Calu3 (cell line): ENCODE measurements at regions of chr7 and their contacts with region 1.

Region 1: GRCh38 chr7:56199639-56200038 is 83.4 kb upstream of the NUPR2 start:
- DNase-seq: no peak
- H3K4me3 Mint-ChIP-seq: no peak overlapping the region
- H3K27ac Mint-ChIP-seq: no peak overlapping the region
- H3K4me1 Mint-ChIP-seq: no peaks in the 10 kb centered on the region
- H3K27me3 Mint-ChIP-seq: no peaks in the 10 kb centered on the region
- CTCF ChIP-seq: no peak

Region 2: DNA sequence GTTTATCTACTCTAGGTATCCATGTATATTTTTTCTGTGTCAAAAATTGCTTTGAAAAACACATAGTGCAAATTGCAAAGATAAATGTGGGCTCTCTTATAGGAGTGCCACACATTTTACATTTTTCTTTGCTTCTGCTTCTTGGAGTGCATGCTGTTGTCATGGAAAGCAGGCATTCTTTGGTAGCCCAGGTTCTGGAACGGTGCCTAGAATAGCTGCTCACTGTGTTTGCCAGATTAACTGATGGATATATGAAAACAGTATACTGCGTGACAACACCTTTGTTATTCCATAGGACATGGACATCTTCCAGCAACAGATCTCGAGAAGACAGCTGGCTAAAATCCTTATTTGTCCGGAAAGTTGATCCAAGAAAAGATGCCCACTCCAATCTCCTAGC is 221.8 kb before region 1 on chr7:
- CTCF ChIA-PET with region 1: no interaction called
- intact Hi-C with region 1: no loop called
- DNase-seq: no peak
- H3K4me3 Mint-ChIP-seq: no peak overlapping the region
- H3K27ac Mint-ChIP-seq: no peak overlapping the region
- H3K4me1 Mint-ChIP-seq: no peaks in the 10 kb centered on the region
- H3K27me3 Mint-ChIP-seq: no peaks in the 10 kb centered on the region
- CTCF ChIP-seq: no peak

Region 3: DNA sequence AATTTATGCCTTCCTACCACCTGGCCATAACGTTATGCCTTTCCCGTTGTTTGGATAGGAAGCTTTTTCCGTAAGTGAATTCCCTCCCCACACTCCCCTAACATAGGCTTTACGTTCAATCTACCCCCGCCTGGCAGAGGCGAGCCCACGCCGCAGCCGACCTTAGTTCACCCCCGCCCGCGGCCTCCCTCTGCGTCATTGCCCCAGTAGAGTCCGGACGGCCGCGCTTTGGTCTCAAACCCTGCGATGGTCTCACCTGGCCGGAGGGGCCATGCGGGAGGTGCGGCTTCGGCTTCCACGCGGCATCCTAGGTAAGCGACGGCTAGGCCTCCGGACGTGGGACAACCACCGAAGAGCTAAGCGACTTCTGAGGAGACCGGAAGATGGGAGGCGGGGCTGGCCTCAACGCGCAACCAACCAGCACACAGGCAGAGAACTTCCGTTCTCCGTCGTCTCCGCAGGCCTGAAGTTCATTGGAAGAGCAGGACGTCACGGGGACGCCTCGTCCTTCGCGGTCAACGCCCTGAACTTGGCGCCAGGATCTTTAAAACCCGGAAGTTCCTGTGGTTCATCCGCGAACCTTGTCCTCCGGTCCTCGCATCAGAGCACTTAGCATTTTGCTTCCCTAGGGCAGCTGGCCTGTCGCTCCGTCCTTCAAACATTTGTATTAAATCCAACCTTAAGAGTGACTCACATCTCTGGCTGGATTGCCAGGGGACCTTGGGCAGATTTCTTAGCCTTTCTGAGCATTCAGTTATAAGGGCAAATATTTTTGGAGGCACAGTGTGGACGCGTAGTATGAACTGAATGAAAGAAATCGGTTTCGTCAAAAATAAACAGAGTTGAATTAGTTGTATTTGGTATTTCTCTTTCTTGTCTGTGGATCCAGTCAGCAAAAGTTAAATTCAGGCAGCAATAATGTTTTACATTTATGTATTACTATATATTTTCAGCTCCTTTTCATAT is 93.2 kb before region 1 on chr7 and contains the start of gene CHCHD2:
- CTCF ChIA-PET with region 1: no interaction called
- intact Hi-C with region 1: loop called (anchors 10 kb)
- DNase-seq: peak; percentile 98
- H3K4me3 Mint-ChIP-seq: peak within 1 kb of the TSS; percentile 96
- H3K27ac Mint-ChIP-seq: peak within 1 kb of the TSS; percentile 94
- H3K4me1 Mint-ChIP-seq: no peaks in the 10 kb centered on the region
- H3K27me3 Mint-ChIP-seq: no peaks in the 10 kb centered on the region
- CTCF ChIP-seq: no peak
- total RNA-seq, gene CHCHD2: 673 and 699 TPM in 2 replicates

Region 4: DNA sequence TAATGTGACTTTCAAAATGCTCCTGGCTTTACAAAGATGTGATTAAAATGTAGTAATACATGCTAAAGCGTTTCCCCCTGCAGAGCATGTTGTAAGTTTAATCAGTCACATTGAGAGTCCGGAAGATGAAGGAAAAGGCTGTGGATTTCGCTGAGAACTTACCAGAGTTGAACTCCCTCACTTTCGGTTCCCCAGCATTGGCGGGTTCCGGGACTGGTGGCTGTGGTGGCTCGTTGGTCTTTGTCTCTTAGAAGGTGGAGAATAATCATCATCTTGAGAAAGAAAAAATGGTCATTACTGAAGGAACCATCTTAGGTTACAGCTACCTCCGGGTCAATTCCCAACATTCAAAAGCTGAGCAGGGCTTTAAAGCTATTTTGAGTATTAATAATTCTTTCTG is 73.8 kb before region 1 on chr7:
- CTCF ChIA-PET with region 1: no interaction called
- intact Hi-C with region 1: loop called (anchors 10 kb)
- DNase-seq: no peak
- H3K4me3 Mint-ChIP-seq: no peak overlapping the region
- H3K27ac Mint-ChIP-seq: no peak overlapping the region
- H3K4me1 Mint-ChIP-seq: no peaks in the 10 kb centered on the region
- H3K27me3 Mint-ChIP-seq: no peaks in the 10 kb centered on the region
- CTCF ChIP-seq: no peak